ENCODE measurements at regions of chr1 and their contacts with region 1.

Region 1: GRCh38 chr1:11645670-11646265 is 8.5 kb downstream of the FBXO2 start:
- DNase-seq: peak; percentile 60
- ATAC-seq: peak; percentile 74
- H3K4me3 ChIP-seq: no peak overlapping the region
- H3K27ac ChIP-seq: no peak overlapping the region
- H3K4me1 ChIP-seq: no peaks in the 10 kb centered on the region; the same call in 1 of the 2 replicates
- H3K27me3 ChIP-seq: peaks cover 19% of the 10 kb centered on the region
- CTCF ChIP-seq: peak; percentile 74
- POLR2A ChIP-seq: no peak
- RAD21 ChIP-seq: peak; percentile 73

Region 2: DNA sequence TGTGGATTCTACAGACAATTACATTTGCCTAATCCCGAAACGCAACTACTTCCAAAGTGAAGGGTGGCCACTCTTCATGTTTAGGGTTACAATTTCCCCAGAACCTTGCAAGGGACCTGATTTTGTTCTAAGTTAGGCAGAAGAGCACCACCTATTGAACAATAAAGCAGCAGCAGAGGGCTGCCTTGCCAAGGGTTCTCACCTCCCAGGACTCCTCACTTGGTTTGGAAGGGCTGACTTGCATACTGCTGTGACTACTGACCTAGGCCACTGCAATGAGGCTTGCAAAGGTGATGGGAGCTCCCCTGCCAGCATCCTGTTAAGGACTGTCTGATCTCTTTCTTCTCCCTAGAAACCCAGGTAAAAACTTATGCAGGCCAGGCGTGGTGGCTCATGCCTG is 397.6 kb before region 1 on chr1:
- CTCF ChIA-PET with region 1: no interaction called
- POLR2A ChIA-PET with region 1: no interaction called
- dilution Hi-C with region 1: no loop called
- in situ Hi-C with region 1: loop called (anchors 5 kb)
- intact Hi-C with region 1: no loop called
- DNase-seq: no peak
- ATAC-seq: no peak
- H3K4me3 ChIP-seq: no peak overlapping the region
- H3K27ac ChIP-seq: no peak overlapping the region
- H3K4me1 ChIP-seq: no peaks in the 10 kb centered on the region
- H3K27me3 ChIP-seq: no peaks in the 10 kb centered on the region
- CTCF ChIP-seq: no peak
- POLR2A ChIP-seq: no peak
- RAD21 ChIP-seq: no peak

Region 3: GRCh38 chr1:11285883-11286734 is 359.7 kb before region 1 on chr1:
- CTCF ChIA-PET with region 1: no interaction called
- POLR2A ChIA-PET with region 1: no interaction called
- dilution Hi-C with region 1: no loop called
- in situ Hi-C with region 1: no loop called
- intact Hi-C with region 1: loop called (anchors 1 kb)
- DNase-seq: peak; percentile 34
- ATAC-seq: peak; percentile 34
- H3K4me3 ChIP-seq: no peak overlapping the region
- H3K27ac ChIP-seq: peak overlapping the region; percentile 39; the same call in 1 of the 2 replicates
- H3K4me1 ChIP-seq: peaks cover 12% of the 10 kb centered on the region
- H3K27me3 ChIP-seq: no peaks in the 10 kb centered on the region
- CTCF ChIP-seq: peak; percentile 40; the same call in 1 of the 2 replicates
- POLR2A ChIP-seq: no peak
- RAD21 ChIP-seq: peak; percentile 41

Measured in IMR-90 (cell line).